ENCODE measurements at regions of chr6 and their contacts with region 1.

Region 1: GRCh38 chr6:158559895-158560835 is at the start of gene TMEM181:
- DNase-seq: peak; percentile 59 to 90 (median 74)
- H3K4me3 ChIP-seq: peak within 1 kb of the TSS; percentile 71 to 97 (median 88)
- H3K27ac ChIP-seq: peak within 1 kb of the TSS in 58 of 59 donors; percentile 4 to 93 (median 80)
- H3K27me3 ChIP-seq: no peaks in the 10 kb centered on the region
- CTCF ChIP-seq: peak in 26 of 56 donors; percentile 7 to 51 (median 24)
- total RNA-seq, gene TMEM181: 23.4 to 51.6 (median 36.0) TPM

Region 2: DNA sequence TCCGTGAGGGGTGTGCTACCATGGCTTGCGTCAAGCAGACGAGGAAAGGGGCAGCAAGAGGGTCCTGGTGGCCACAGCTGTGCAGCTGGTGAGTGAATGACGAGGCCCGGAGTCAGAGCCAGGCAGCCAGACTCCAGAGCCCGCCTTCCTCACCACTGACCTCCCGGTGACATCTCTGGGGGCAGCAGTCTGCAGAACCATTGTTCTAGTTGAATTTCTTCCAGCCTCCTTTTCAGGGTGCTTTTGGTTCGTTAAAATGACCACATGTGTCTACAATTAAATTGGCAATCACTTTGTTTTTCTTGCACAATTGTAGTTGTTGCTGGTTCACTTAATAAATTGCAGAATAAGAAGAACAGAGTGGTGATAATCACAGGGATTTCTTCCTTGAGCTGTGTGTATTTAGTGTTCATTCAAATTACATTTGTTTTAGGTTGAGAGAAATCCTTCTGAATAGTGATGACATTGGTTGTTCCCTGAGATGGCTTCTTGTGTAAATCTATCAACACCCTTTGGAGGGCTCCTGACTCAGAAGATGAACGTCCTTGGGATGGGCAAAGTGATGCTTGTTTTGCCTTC is 151.5 kb before region 1 on chr6:
- intact Hi-C with region 1: no loop called
- DNase-seq: peak in 9 of 10 donors; percentile 47 to 74 (median 65)
- H3K4me3 ChIP-seq: peak overlapping the region in 5 of 59 donors; percentile 5 to 30 (median 21)
- H3K27ac ChIP-seq: peak overlapping the region; percentile 30 to 98 (median 90)
- H3K27me3 ChIP-seq: no peaks in the 10 kb centered on the region
- CTCF ChIP-seq: peak in 5 of 56 donors; percentile 9 to 22 (median 12)

Region 3: DNA sequence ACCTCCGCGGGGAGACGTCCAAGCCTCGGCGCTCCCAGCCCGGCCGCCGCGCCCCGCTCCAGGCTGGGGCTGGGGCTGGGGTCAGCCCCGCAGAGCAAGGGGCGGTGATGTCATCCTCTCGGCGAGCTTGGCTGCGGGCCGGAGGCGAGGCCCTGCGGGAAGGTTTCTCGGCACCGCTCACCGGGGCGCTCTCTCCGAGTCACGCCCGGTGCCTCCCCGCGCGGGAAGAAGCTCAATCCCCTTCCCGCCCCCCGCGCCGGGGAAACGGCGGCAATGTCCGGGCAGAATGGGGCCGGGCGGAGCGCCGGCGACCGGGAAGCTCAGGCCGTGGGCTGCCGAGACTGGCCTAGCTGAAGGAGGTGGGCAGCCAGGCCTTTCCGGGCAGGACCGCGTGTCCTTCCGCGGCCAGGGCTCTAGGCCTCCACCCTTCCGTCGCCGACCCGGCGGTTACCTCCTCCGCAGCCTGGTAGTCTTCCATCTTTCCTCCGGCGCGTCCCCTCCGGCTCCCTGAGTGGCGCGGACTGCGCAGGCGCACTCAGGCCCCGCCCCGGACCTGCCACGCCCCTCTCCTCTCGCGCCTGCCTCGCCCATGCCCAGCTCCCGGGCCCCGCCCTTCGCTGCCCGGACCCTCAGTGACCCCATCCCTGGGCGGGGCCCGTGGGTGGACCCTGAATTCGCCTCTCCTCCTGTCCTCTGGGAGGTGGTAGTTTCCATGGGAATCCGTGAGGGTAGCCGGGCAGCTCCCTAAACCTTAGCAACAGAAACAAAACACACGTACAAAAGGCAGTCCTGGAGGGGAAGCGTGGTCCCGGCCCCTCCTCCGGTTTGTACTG is 84.3 kb after region 1 on chr6 and contains the start of gene DYNLT1:
- intact Hi-C with region 1: loop called in 1 of 2 experiments (anchors 5 kb)
- DNase-seq: peak; percentile 72 to 94 (median 82)
- H3K4me3 ChIP-seq: peak within 1 kb of the TSS; percentile 67 to 100 (median 97)
- H3K27ac ChIP-seq: peak within 1 kb of the TSS; percentile 51 to 98 (median 88)
- H3K27me3 ChIP-seq: no peaks in the 10 kb centered on the region
- CTCF ChIP-seq: peak in 19 of 56 donors; percentile 2 to 39 (median 20)
- total RNA-seq, gene DYNLT1: 22.6 to 58.2 (median 34.6) TPM

Region 4: GRCh38 chr6:158752613-158753012 is 192.4 kb after region 1 on chr6:
- intact Hi-C with region 1: no loop called
- DNase-seq: peak; percentile 76 to 93 (median 86)
- H3K4me3 ChIP-seq: peak overlapping the region in 3 of 59 donors; percentile 2 to 30 (median 28)
- H3K27ac ChIP-seq: peak overlapping the region in 10 of 59 donors; percentile 10 to 66 (median 35)
- H3K27me3 ChIP-seq: no peaks in the 10 kb centered on the region
- CTCF ChIP-seq: peak in 47 of 56 donors; percentile 3 to 68 (median 42)